ENCODE measurements at regions of chr19 and their contacts with region 1.

Region 1: DNA sequence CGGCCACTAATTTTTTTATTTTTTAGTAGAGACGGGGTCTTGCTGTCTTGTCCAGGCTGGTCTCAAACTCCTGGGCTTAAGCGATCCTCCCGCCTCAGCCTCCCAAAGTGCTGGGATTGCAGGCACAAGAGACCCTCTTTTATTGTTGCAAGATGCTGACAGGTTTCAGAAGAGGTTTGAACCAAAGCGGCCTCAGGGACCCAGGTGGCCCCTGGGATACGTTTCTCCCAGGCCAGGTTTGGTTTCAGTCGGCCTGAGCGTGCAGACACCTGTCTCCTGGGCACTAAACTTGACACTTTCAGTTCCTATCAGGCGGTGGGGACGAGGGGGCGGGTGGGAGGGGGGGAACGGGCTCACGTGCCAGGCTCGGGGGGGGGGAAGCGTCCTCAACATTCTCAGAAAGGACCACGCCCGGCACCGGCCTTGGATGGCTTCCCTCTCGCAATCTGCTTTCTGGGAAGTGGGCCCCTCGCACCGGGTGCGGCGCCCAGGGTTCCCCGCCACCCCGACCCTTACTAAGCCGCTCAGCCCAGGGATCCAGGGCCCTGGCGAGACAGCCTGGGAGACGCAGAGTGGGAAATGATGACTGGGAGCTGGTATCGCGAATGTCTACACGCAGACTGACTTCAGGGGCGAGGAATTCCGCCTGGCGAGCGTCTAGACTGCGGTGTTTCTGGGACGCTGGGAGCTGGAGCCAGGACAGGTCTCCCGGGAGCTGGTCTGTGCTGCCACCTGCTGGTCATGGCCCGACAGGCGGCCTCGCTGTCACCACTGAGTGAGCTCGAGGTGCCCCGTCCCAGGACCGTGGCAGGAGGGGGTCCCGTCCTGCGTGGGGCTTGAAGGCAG is 91.6 kb downstream of the GNG7 start:
- DNase-seq: peak; percentile 77
- H3K4me3 ChIP-seq: peak overlapping the region; percentile 47
- CTCF ChIP-seq: peak; percentile 96

Region 2: GRCh38 chr19:2427429-2428320 is 183.2 kb before region 1 on chr19 and contains the start of gene TIMM13:
- CTCF ChIA-PET with region 1: interaction called, 87 read pairs
- POLR2A ChIA-PET with region 1: interaction called, 3 read pairs
- DNase-seq: peak; percentile 76
- H3K4me3 ChIP-seq: peak within 1 kb of the TSS; percentile 92
- CTCF ChIP-seq: no peak

Region 3: GRCh38 chr19:2455851-2456570 is 154.8 kb before region 1 on chr19:
- CTCF ChIA-PET with region 1: interaction called, 232 read pairs
- POLR2A ChIA-PET with region 1: interaction called, 4 read pairs
- DNase-seq: no peak
- H3K4me3 ChIP-seq: peak overlapping the region; percentile 81
- CTCF ChIP-seq: no peak

Region 4: DNA sequence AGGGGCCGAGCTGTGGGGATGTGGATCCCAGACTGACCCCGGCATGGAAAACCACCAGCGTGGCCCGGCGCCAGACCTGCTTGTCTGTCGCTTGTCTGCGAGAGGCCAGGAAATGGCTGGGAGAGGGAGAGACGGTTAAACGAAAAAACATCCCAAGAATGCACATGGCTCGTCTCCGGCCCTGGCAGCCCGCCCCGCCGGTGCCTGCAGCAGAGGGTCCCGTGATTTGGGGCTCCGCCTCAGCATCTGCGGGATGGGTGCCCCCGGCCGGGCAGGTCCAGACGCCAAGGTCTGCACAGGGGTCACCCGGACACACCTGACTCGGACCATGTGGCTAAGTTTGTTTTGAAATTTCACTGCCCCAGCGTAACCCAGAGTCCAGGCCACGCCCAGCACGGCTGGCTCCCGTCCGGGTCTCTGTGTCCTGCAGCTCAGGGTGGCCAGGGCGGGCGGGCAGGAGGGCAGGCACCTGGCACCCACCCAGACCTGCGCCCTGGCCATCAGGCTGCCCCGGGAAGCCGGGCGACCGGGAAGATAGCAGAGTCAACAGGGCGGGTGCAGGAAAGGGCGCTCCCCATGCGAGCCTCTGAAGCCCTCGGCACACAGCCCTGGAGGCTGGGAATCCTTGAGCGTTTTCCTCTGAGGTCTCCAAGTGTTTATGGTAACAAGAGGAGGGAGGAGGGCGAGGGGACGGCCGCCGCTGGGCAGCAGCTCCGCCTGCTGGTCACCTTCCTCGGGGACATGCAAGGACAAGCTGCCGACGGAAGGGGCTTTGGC is 31.8 kb before region 1 on chr19:
- CTCF ChIA-PET with region 1: interaction called, 22 read pairs
- POLR2A ChIA-PET with region 1: interaction called, 9 read pairs
- DNase-seq: peak; percentile 65
- H3K4me3 ChIP-seq: peak overlapping the region; percentile 64
- CTCF ChIP-seq: peak; percentile 98

Region 5: GRCh38 chr19:2588081-2588777 is 22.6 kb before region 1 on chr19:
- CTCF ChIA-PET with region 1: interaction called, 13 read pairs
- POLR2A ChIA-PET with region 1: no interaction called
- DNase-seq: no peak
- H3K4me3 ChIP-seq: no peak overlapping the region
- CTCF ChIP-seq: no peak

Region 6: GRCh38 chr19:2627319-2627829 is 16.5 kb after region 1 on chr19:
- CTCF ChIA-PET with region 1: interaction called, 76 read pairs
- POLR2A ChIA-PET with region 1: no interaction called
- DNase-seq: peak; percentile 88
- H3K4me3 ChIP-seq: no peak overlapping the region
- CTCF ChIP-seq: no peak